RWPE1 (cell line): ENCODE measurements at regions of chr9 and their contacts with region 1.

Region 1: GRCh38 chr9:21252721-21253547 is 13.1 kb upstream of the IFNA14 start:
- DNase-seq: peak; percentile 46
- H3K27ac ChIP-seq: no peak overlapping the region
- CTCF ChIP-seq: peak; percentile 79

Region 2: GRCh38 chr9:21267485-21268346 is 14.8 kb after region 1 on chr9:
- CTCF ChIA-PET with region 1: interaction called, 10 read pairs
- POLR2A ChIA-PET with region 1: no interaction called
- DNase-seq: no peak
- H3K27ac ChIP-seq: no peak overlapping the region
- CTCF ChIP-seq: no peak

Region 3: DNA sequence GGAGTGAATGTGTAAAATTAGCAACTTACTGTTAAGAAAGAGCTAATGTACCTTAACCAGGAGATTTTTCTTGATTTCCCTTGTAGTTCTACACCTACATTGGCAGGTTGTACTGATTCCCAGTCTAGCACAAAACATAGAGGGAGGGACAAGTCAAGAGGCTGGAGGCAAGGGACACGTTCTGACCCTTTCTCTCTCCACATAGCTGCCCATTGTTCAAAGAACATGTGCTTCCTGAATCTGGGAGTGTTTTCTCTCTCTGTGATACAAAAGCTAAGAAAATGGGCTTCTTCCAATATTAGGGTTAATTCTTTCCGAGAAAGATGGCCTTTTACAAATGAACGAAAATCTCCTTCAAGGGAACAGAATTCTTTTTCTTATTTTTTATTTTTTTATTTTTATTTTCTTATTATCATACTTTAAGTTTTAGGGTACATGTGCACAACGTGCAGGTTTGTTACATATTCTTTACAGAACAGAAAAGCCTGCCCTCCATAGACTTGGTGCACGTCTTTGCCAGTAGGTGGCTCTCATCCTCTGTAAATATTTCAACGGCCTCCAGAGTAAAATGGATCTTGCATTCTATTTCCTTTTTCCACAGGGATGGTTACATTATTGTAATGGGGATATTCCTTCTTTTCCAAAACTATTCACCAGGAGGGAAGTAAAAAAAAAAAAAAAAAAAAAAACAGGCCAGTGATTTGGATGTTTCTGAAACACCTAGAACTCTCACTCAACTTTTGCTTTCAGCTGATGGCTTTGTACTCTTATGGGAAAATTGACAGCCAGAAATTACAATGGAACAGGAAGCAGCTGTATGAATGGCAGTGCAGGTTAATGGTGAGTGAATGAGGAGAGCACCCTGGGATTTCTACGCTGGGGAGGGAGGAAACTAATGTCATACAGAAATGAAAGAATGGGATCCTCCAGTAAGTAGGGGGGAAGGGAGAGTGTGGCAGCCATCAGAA is 65.3 kb after region 1 on chr9:
- CTCF ChIA-PET with region 1: interaction called, 12 read pairs
- POLR2A ChIA-PET with region 1: no interaction called
- DNase-seq: peak; percentile 39
- H3K27ac ChIP-seq: no peak overlapping the region
- CTCF ChIP-seq: peak; percentile 92